HepG2 (cell line): ENCODE measurements at regions of chr17 and their contacts with region 1.

Region 1: GRCh38 chr17:57561072-57561861 is 183.8 kb downstream of the CCDC182 start:
- DNase-seq: peak; percentile 99
- ATAC-seq: peak; percentile 93
- H3K4me3 ChIP-seq: peak overlapping the region in 2 of 3 experiments; percentile 21 to 49; a peak in 4 of 6 replicates
- H3K27ac ChIP-seq: peak overlapping the region; percentile 82
- H3K4me1 ChIP-seq: peaks cover 65% of the 10 kb centered on the region
- H3K27me3 ChIP-seq: no peaks in the 10 kb centered on the region
- CTCF ChIP-seq: peak; percentile 51
- EP300 ChIP-seq: peak; percentile 99 to 100
- POLR2A ChIP-seq: peak; percentile 60 to 71
- RAD21 ChIP-seq: peak; percentile 77

Region 2: GRCh38 chr17:56099649-56100048 is 1461.6 kb before region 1 on chr17:
- CTCF ChIA-PET with region 1: no interaction called
- POLR2A ChIA-PET with region 1: no interaction called
- in situ Hi-C with region 1: no loop called
- intact Hi-C with region 1: no loop called
- DNase-seq: no peak
- ATAC-seq: no peak
- H3K4me3 ChIP-seq: no peak overlapping the region
- H3K27ac ChIP-seq: no peak overlapping the region
- H3K4me1 ChIP-seq: no peaks in the 10 kb centered on the region
- H3K27me3 ChIP-seq: no peaks in the 10 kb centered on the region
- CTCF ChIP-seq: no peak
- EP300 ChIP-seq: no peak
- POLR2A ChIP-seq: no peak
- RAD21 ChIP-seq: no peak

Region 3: GRCh38 chr17:57413848-57414651 is 147.2 kb before region 1 on chr17:
- CTCF ChIA-PET with region 1: no interaction called
- POLR2A ChIA-PET with region 1: no interaction called
- in situ Hi-C with region 1: no loop called
- intact Hi-C with region 1: loop called (anchors 1 kb)
- DNase-seq: peak; percentile 98
- ATAC-seq: peak; percentile 100
- H3K4me3 ChIP-seq: peak overlapping the region in 1 of 3 experiments; percentile 26; a peak in 1 of 6 replicates
- H3K27ac ChIP-seq: peak overlapping the region; percentile 86
- H3K4me1 ChIP-seq: peaks cover 76% of the 10 kb centered on the region
- H3K27me3 ChIP-seq: no peaks in the 10 kb centered on the region
- CTCF ChIP-seq: no peak
- EP300 ChIP-seq: peak; percentile 70 to 97; a peak in 3 of 4 replicates
- POLR2A ChIP-seq: no peak
- RAD21 ChIP-seq: peak; percentile 52

Region 4: DNA sequence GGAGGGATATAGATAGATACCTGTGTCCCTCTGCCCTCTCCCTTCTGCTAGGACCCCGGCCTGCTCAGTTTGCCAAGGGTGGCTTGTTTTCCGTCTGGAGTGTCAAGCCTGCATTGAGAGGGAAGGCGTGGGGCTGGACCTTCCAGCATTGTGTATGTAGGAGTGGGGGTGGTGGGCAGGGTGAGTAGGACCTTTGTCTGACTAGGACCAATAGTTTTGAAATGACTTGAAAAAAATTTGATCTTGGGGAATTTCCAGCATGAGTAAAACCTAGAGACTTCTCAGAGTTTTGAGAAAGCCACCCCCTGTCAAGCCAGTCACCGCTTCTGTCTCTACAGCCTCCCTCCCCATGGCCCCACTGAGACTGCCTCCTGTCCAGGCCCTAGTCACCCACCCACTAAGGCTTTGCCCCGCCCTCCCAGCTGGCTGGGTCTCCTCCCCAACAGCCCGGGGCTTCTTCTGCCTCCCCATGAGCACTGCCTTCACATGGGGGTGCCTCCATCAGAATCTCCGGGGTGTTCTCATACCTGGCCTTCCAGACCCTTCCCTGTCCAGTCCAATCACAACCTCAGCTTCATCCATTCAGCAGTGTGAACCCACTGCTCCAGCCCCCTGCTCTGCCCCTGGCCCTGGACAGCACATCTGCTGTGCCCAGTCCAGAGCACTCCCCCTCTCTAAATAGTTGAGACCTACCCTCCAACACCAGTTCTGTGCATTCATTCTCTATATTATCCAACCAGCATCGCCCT is 98.0 kb before region 1 on chr17:
- CTCF ChIA-PET with region 1: interaction called, 3 read pairs
- POLR2A ChIA-PET with region 1: interaction called, 13 read pairs
- in situ Hi-C with region 1: loop called (anchors 5 kb)
- intact Hi-C with region 1: loop called (anchors 1 kb)
- DNase-seq: peak; percentile 30
- ATAC-seq: no peak
- H3K4me3 ChIP-seq: no peak overlapping the region
- H3K27ac ChIP-seq: no peak overlapping the region
- H3K4me1 ChIP-seq: peaks cover 74% of the 10 kb centered on the region
- H3K27me3 ChIP-seq: no peaks in the 10 kb centered on the region
- CTCF ChIP-seq: no peak
- EP300 ChIP-seq: no peak
- POLR2A ChIP-seq: no peak
- RAD21 ChIP-seq: no peak

Region 5: DNA sequence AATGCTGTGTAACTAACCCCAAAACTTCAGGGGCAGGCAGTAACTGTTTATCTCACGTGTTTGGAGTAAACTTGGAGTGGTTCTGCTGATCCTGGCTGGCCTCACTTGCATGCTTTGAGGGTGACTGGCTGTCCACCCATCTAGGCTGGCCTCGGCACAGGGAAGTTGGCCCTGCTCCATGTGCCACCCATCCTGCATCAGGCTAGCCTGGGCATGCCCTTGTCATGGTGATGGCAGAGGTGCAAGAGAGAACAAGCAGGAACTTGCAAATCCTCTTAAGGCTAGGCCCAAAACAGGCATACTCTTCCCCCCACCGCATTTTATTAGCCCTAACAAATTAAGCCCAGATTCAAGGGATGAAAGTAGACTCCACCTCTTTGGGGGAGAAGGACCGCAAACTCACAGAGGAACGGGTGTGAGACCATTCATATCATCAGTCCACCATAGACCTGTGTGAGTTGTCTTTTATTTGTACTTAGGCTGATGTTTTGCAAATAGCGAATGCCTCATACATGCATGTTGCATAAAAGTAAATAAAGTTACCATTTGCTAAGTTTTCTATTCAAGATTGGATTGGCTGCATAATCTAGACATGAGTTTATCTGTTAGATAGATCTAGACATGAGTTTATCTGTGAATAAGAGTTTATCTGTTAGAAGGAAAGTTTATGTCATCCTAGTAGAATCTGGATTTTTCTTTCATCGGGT is 37.2 kb before region 1 on chr17:
- CTCF ChIA-PET with region 1: no interaction called
- POLR2A ChIA-PET with region 1: interaction called, 4 read pairs
- in situ Hi-C with region 1: loop called (anchors 5 kb)
- intact Hi-C with region 1: no loop called
- DNase-seq: no peak
- ATAC-seq: no peak
- H3K4me3 ChIP-seq: no peak overlapping the region
- H3K27ac ChIP-seq: peak overlapping the region; percentile 18
- H3K4me1 ChIP-seq: peaks cover 87% of the 10 kb centered on the region
- H3K27me3 ChIP-seq: no peaks in the 10 kb centered on the region
- CTCF ChIP-seq: no peak
- EP300 ChIP-seq: no peak
- POLR2A ChIP-seq: no peak
- RAD21 ChIP-seq: no peak

Region 6: GRCh38 chr17:57548421-57549410 is 12.6 kb before region 1 on chr17:
- CTCF ChIA-PET with region 1: no interaction called
- POLR2A ChIA-PET with region 1: interaction called, 29 read pairs
- in situ Hi-C with region 1: no loop called
- intact Hi-C with region 1: loop called (anchors 1 kb)
- DNase-seq: peak; percentile 81
- ATAC-seq: peak; percentile 82
- H3K4me3 ChIP-seq: no peak overlapping the region
- H3K27ac ChIP-seq: peak overlapping the region; percentile 74
- H3K4me1 ChIP-seq: peaks cover 96% of the 10 kb centered on the region
- H3K27me3 ChIP-seq: no peaks in the 10 kb centered on the region
- CTCF ChIP-seq: no peak
- EP300 ChIP-seq: peak in 1 of 2 experiments; percentile 79; a peak in 2 of 4 replicates
- POLR2A ChIP-seq: no peak
- RAD21 ChIP-seq: no peak

Region 7: GRCh38 chr17:57604771-57605674 is 43.8 kb after region 1 on chr17:
- CTCF ChIA-PET with region 1: no interaction called
- POLR2A ChIA-PET with region 1: interaction called, 5 read pairs
- in situ Hi-C with region 1: no loop called
- intact Hi-C with region 1: loop called (anchors 1 kb)
- DNase-seq: no peak
- ATAC-seq: no peak
- H3K4me3 ChIP-seq: no peak overlapping the region
- H3K27ac ChIP-seq: no peak overlapping the region
- H3K4me1 ChIP-seq: peaks cover 41% of the 10 kb centered on the region
- H3K27me3 ChIP-seq: no peaks in the 10 kb centered on the region
- CTCF ChIP-seq: no peak
- EP300 ChIP-seq: no peak
- POLR2A ChIP-seq: no peak
- RAD21 ChIP-seq: no peak